ENCODE measurements at regions of chr4 and their contacts with region 1.

Region 1: DNA sequence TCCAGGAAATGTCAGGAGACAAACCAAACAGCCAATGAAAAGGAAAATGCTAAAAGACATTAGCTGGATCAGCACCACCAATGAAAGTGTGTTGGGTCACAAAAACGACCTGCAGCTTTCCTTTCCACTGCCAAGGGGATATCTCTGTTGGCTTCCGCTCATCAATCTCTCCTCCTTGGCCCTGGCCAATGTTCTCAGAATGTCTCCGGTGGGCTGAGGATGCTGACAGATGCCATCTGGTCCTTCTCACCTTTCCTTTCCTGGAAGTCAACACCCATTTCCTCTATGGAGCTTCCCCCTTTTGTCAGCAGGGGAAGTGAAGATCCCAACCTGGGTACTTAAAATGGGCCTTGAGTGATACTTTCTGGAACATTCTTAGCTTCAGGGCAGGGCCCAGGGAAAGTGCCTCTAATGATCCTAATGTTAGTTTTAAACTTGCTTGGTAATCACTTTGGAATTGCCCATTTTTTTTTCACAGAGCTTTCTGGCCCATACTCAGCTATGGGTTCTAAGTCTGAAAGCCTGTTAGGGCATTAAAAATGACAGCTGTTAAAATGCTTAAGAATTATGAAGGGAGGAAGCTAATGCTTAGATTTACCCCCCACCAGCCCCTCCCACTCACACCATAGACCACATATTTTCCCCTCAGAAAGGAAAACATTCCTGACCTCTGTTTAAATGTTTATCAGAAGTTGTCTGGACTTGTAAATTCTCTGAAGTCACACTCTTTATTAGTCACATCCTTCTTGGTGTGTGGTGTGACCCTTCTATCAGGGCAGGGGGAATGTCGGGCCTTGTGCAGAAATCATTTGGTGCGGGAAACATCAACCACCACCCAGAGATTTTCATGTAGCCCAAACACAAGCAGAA is 29.2 kb downstream of the IGFBP7 start:
- DNase-seq: peak; percentile 99
- H3K4me3 ChIP-seq: no peak overlapping the region
- CTCF ChIP-seq: no peak

Region 2: GRCh38 chr4:57013543-57014120 is 67.4 kb before region 1 on chr4:
- CTCF ChIA-PET with region 1: no interaction called
- POLR2A ChIA-PET with region 1: no interaction called
- DNase-seq: no peak
- H3K4me3 ChIP-seq: no peak overlapping the region
- CTCF ChIP-seq: no peak

Region 3: GRCh38 chr4:57064811-57065711 is 16.0 kb before region 1 on chr4:
- CTCF ChIA-PET with region 1: interaction called, 6 read pairs
- POLR2A ChIA-PET with region 1: interaction called, 30 read pairs
- DNase-seq: peak; percentile 95
- H3K4me3 ChIP-seq: no peak overlapping the region; the same call in none of the 2 replicates
- CTCF ChIP-seq: no peak

Region 4: GRCh38 chr4:57102050-57102624 is 21.1 kb after region 1 on chr4:
- CTCF ChIA-PET with region 1: interaction called, 5 read pairs
- POLR2A ChIA-PET with region 1: interaction called, 14 read pairs
- DNase-seq: peak; percentile 82
- H3K4me3 ChIP-seq: no peak overlapping the region
- CTCF ChIP-seq: no peak

Region 5: DNA sequence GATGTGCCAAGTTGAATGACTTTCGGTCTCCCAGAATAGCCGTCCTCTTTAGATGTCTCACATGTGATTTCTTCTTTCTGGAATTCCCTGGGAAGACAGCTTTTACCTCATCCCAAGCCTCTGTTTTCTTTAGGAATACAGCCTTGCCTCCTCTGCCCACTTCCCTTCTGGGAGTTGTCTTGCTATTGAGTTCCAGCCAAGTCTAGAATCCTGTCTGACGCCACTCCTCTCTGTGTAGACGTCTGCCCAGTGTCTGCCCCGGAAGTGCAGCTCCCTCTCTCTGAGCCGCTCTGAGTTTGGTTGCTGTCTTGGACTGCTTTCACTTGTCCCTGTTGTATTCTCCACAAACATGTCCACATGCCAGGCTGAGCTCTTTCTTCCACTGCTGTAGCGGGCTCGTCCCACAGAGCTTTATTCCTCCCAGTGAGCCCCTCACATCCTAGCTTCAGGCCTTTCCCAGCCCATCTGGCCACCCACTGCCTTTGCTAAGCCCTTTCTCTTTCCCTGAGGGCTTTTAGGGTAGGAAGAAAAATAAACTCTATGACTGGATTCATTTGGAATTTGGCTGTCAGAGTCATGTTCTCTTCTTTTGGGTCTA is 38.1 kb after region 1 on chr4:
- CTCF ChIA-PET with region 1: no interaction called
- POLR2A ChIA-PET with region 1: interaction called, 11 read pairs
- DNase-seq: peak; percentile 95
- H3K4me3 ChIP-seq: peak overlapping the region; percentile 48
- CTCF ChIP-seq: no peak

Region 6: GRCh38 chr4:57342411-57342810 is 261.4 kb after region 1 on chr4:
- CTCF ChIA-PET with region 1: no interaction called
- POLR2A ChIA-PET with region 1: no interaction called
- DNase-seq: no peak
- H3K4me3 ChIP-seq: no peak overlapping the region
- CTCF ChIP-seq: no peak

Measured in AG04449 (cell line).